Activated B cell treated with CpG ODN at 0.5 μM for 24 hours (primary cell): ENCODE measurements at regions of chr1 and their contacts with region 1.

Region 1: DNA sequence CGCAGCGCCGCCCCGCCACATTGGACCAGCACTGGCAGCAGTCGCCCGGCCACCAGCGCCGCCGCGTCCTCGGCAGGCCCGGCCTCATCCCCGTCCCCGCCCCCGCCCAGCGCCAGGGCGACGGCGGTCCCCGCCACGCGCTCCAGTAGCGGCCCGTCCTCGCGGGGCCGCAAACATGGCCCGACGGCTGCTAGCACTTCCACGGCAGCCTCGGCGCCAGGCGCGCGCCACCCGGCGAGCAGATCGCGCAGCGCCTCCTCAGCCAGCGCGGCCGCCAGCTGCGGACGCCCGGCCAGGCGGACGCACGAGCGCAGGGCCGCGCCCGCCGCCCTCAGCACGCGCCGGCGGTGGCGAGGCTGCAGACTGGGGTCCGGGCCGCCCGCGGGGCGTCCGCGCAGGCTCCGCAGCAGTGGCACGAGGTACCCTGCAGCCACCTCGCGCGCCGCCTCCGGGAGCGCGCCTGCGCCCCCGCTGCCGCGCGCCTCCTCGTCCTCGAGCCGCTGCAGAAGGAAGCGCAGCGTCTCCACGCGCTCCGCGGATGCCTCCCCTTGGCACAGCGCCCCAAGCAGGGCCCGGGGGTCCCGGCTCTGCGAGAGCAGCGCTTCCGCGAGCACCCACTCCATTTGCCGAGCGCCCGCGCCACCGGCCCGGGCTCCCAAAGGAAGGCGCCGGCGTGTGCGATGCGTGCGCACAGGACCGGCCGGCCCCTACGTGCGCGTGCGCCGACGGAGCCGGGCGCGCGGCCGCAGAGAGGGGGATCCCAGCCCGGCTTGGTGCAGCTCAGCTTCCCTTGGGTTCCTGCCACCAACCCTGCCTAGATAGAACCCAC is at the start of gene TARBP1:
- DNase-seq: peak; percentile 82
- ATAC-seq: peak; percentile 66
- H3K4me3 Mint-ChIP-seq: peak within 1 kb of the TSS; percentile 85
- H3K27ac Mint-ChIP-seq: peak within 1 kb of the TSS; percentile 88
- H3K4me1 Mint-ChIP-seq: peaks cover 43% of the 10 kb centered on the region
- H3K27me3 Mint-ChIP-seq: peaks cover 5% of the 10 kb centered on the region
- CTCF ChIP-seq: no peak
- total RNA-seq, gene TARBP1: 27.0 and 30.4 TPM in 2 replicates

Region 2: DNA sequence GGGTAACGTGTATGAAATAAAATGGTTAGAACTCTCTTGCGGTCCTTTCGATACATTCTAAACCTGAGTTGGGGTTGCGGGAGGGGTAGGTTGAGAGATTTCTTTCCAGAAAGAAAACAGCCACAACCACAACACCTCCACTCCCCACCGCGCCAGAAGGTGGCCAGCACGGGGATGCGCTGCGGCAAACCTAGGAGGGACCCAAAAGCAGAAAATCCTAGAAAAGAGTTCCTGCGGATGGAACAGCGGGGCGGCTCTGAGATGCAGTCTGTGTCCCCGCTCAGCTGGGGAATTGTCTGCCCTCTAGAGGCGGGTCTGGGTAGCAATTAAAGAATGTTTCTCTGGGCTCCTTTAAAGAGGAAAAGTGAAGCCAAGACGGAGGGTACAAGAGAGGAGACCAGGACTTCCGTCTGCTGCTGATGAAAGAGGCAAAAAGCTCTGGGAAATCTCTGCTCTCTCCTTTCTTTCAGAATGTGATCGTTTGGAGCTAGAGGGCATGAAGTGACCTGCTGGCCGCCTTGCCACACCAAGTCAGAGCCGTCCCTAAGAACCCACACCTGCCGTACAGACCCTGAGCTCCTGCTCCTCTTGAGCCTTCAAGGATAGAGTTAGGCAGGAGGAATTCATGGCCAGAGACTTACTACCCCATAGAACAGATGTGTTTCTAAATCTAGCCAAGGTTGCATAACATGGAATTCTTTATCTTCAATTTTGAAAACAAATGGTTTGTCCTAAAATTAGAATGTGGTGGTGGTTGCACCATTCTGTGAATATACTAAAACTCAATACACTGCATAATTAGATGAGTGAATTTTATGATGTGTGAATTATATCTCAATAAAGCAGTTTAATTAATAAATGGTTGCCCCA is 152.0 kb before region 1 on chr1:
- CTCF ChIA-PET with region 1: no interaction called
- POLR2A ChIA-PET with region 1: no interaction called
- intact Hi-C with region 1: loop called (anchors 5 kb)
- DNase-seq: peak; percentile 35
- ATAC-seq: peak; percentile 79
- H3K4me3 Mint-ChIP-seq: peak overlapping the region; percentile 86
- H3K27ac Mint-ChIP-seq: peak overlapping the region; percentile 47
- H3K4me1 Mint-ChIP-seq: peaks cover 39% of the 10 kb centered on the region
- H3K27me3 Mint-ChIP-seq: peaks cover 13% of the 10 kb centered on the region
- CTCF ChIP-seq: peak; percentile 34

Region 3: DNA sequence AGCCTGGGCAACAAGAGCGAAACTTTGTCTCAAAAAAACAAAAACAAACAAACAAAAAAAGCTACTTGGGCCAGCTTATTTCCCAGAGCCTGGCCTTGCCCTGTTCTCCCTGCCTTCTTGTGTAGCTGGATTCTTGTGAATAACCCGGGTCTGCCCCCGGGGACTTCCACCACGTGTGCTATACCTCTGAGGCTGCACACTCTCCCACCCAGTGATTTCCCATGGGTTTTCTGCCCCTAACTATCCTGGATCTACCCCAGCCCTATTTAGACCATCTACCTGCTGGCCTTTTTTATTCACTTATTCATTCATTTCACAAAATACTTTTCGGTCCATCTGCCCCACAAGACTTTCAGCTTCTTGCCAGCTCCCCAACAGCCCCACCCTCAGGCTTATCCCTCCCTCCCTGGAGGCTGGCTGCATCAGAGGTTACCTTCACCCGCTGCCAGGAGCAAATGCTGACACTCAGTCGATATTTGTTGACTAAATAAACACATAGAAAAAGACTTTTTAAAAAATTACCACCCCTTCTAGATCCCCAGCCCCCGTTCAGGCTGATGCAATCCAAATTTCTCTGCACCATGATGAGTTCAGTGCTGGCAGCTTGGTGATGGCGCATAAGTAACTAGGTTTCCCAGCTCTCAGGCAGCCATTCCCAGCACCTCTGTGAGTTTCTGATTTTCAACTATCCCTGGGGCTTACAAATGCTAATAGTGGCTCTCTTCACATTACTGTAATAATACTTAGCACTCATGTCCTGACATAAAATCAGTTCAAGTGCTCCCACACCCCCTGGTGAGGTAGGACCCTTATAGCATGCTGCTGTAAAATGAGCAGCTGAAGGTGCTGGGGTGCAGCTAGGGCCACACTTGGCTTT is 31.0 kb after region 1 on chr1:
- CTCF ChIA-PET with region 1: no interaction called
- POLR2A ChIA-PET with region 1: no interaction called
- intact Hi-C with region 1: no loop called
- DNase-seq: no peak
- ATAC-seq: no peak
- H3K4me3 Mint-ChIP-seq: no peak overlapping the region
- H3K27ac Mint-ChIP-seq: no peak overlapping the region
- H3K4me1 Mint-ChIP-seq: peaks cover 13% of the 10 kb centered on the region
- H3K27me3 Mint-ChIP-seq: no peaks in the 10 kb centered on the region
- CTCF ChIP-seq: no peak

Region 4: GRCh38 chr1:234521807-234522195 is 43.1 kb after region 1 on chr1:
- CTCF ChIA-PET with region 1: no interaction called
- POLR2A ChIA-PET with region 1: no interaction called
- intact Hi-C with region 1: loop called (anchors 1 kb)
- DNase-seq: no peak
- ATAC-seq: no peak
- H3K4me3 Mint-ChIP-seq: no peak overlapping the region
- H3K27ac Mint-ChIP-seq: no peak overlapping the region
- H3K4me1 Mint-ChIP-seq: peaks cover 38% of the 10 kb centered on the region
- H3K27me3 Mint-ChIP-seq: no peaks in the 10 kb centered on the region
- CTCF ChIP-seq: no peak

Region 5: DNA sequence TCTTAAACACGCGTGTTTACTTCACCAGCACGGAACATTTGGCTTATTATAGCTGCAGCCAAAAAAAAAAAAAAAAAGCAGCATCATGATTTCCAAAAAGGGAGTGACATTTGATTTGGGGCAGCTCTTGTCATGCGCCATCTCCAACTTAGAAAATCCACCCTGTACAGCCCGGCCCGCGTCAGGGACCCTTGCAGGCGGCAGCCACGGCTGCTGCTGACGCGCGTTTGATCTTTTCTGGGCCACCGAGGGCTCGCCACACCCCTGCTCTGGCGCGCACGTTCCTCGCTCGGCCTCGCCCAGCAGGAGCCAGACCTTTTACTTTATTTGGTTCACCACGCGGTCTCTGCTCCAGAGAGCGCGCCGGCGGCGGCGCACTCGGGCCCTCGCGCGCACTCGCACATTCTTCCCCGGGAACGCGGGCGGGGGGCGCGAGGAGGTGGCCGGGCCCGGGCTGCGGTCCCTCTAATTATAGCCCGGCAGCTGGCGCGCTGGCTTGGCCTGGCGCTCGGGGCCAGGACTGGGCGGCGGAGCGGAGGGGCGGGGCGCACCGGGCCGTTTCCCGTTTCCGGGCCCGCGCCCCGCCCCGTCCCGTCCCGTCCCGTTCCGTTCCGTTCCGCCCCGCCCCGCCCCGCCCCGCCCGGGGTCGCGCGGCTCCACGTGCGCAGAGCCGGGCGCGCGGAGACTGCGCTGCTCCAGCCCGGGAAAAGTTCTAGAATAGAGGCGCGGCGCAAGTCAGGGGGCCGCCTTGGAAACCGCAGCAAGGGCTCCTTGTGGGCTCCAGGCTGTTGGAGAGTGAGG is 121.1 kb after region 1 on chr1:
- CTCF ChIA-PET with region 1: no interaction called
- POLR2A ChIA-PET with region 1: interaction called, 13 read pairs
- intact Hi-C with region 1: loop called (anchors 5 kb)
- DNase-seq: peak; percentile 67
- ATAC-seq: peak; percentile 73
- H3K4me3 Mint-ChIP-seq: peak overlapping the region; percentile 86
- H3K27ac Mint-ChIP-seq: peak overlapping the region; percentile 89
- H3K4me1 Mint-ChIP-seq: peaks cover 66% of the 10 kb centered on the region
- H3K27me3 Mint-ChIP-seq: no peaks in the 10 kb centered on the region
- CTCF ChIP-seq: no peak

Region 6: DNA sequence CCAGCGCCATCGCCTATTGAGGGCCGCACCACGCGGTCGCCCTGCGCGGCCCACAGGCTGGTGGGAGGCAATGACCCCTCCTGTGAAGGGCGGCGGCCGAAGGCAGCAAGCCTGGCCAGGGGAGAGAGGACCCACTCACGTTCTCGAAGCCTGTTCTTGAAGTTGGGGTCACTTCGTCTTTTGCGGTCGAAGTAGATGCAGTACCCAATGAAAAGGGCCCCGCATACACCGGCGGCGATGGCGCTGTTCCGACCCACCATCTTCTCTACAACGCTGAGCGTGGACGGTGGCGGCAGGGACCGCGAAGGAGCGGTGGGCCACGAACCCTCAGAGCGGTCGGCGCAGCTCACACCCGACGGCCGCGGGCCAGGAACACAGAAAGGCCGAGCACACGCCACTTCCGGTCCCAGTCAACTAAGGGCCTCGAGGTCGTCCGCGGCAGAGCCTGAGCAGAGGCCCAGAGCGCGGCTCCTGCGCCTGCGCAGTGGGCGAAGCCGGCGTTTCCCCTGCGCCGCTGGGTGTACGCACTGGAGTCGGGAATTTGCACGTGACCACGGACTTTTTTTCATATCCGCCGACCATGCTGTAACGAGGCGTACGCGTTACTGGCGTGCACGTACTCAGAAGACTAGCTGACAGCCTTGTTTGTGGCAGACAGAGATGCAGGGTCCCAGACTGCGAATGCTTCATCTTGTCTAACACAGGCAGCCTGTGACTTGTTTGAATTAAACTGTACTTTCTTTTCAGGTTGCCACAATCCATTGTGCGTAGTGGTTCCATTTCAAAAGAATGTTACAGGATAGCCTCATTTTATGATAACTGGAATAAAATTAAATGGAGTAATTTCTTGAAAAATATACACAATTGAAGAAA is 650.0 kb after region 1 on chr1 and contains the start of gene TOMM20:
- CTCF ChIA-PET with region 1: no interaction called
- POLR2A ChIA-PET with region 1: no interaction called
- intact Hi-C with region 1: loop called (anchors 1 kb)
- DNase-seq: peak; percentile 91
- ATAC-seq: peak; percentile 93
- H3K4me3 Mint-ChIP-seq: peak within 1 kb of the TSS; percentile 97
- H3K27ac Mint-ChIP-seq: peak within 1 kb of the TSS; percentile 93
- H3K4me1 Mint-ChIP-seq: peaks cover 41% of the 10 kb centered on the region
- H3K27me3 Mint-ChIP-seq: no peaks in the 10 kb centered on the region
- CTCF ChIP-seq: no peak
- total RNA-seq, gene TOMM20: 80.6 and 82.7 TPM in 2 replicates

Region 7: DNA sequence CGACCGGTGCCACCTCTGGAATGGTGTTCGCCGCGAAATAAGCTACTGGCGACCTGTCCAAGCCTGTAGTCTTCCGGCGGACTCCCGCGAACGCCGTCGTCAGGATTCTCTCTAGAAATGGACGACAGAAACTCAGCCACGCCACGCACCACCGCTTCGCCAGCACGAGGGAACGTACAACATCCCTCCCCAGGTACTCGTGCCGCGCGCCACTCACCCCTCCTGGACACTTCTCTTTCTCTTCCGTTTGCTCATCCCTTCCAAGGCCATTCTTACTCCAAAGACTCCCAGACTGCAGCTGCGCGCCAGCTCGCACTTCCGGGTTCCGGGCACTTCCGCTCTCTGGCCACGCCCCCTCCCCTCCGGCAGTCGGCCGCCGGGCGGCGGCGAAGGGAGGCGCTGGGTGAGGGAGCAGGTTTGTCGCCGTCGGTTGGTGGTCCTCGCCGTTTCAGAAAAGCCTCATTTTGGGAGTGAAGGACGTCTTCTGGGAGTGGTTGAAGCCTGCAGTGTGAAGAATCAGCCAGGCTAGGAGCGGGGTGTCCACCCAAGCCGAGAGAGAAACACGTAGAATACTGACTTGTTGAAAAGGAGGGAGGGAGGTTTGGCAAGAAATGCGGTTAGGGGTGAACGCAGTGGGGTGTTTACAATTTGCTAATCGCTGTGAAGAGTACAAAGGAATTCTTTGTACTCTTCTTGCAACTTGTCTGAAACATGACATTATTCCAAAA is 682.4 kb after region 1 on chr1 and contains the start of gene RBM34:
- CTCF ChIA-PET with region 1: no interaction called
- POLR2A ChIA-PET with region 1: interaction called, 3 read pairs
- intact Hi-C with region 1: loop called (anchors 2 kb)
- DNase-seq: peak; percentile 90
- ATAC-seq: peak; percentile 94
- H3K4me3 Mint-ChIP-seq: peak within 1 kb of the TSS; percentile 96
- H3K27ac Mint-ChIP-seq: peak within 1 kb of the TSS; percentile 99
- H3K4me1 Mint-ChIP-seq: peaks cover 21% of the 10 kb centered on the region
- H3K27me3 Mint-ChIP-seq: no peaks in the 10 kb centered on the region
- CTCF ChIP-seq: no peak
- total RNA-seq, gene RBM34: 122 and 128 TPM in 2 replicates

Region 8: GRCh38 chr1:235367000-235367908 is 888.6 kb after region 1 on chr1 and contains the start of gene TBCE:
- CTCF ChIA-PET with region 1: no interaction called
- POLR2A ChIA-PET with region 1: interaction called, 3 read pairs
- intact Hi-C with region 1: loop called (anchors 1 kb)
- DNase-seq: peak; percentile 80
- ATAC-seq: peak; percentile 100
- H3K4me3 Mint-ChIP-seq: peak within 1 kb of the TSS; percentile 97
- H3K27ac Mint-ChIP-seq: peak within 1 kb of the TSS; percentile 89
- H3K4me1 Mint-ChIP-seq: peaks cover 29% of the 10 kb centered on the region
- H3K27me3 Mint-ChIP-seq: no peaks in the 10 kb centered on the region
- CTCF ChIP-seq: no peak
- total RNA-seq, gene TBCE: 13.9 and 19.1 TPM in 2 replicates